Activated T-helper 2 cell treated with anti-CD3 and anti-CD28 coated beads, Interferon-gamma antibody, Interleukin-2, Interleukin-4, amounts not matched to agents 10 μg/mL and 5 μg/mL and 100 μg/mL, durations not matched to agents 14 hours and 24 hours and 36 hours (primary cell): ENCODE measurements at regions of chr1 and their contacts with region 1.

Region 1: GRCh38 chr1:167066333-167067122 is 23.6 kb downstream of the GPA33 start:
- DNase-seq: peak; percentile 67
- H3K4me3 Mint-ChIP-seq: peak overlapping the region; percentile 41
- H3K27ac Mint-ChIP-seq: no peak overlapping the region
- H3K4me1 Mint-ChIP-seq: peaks cover 3% of the 10 kb centered on the region
- H3K27me3 Mint-ChIP-seq: peaks cover 9% of the 10 kb centered on the region

Region 2: DNA sequence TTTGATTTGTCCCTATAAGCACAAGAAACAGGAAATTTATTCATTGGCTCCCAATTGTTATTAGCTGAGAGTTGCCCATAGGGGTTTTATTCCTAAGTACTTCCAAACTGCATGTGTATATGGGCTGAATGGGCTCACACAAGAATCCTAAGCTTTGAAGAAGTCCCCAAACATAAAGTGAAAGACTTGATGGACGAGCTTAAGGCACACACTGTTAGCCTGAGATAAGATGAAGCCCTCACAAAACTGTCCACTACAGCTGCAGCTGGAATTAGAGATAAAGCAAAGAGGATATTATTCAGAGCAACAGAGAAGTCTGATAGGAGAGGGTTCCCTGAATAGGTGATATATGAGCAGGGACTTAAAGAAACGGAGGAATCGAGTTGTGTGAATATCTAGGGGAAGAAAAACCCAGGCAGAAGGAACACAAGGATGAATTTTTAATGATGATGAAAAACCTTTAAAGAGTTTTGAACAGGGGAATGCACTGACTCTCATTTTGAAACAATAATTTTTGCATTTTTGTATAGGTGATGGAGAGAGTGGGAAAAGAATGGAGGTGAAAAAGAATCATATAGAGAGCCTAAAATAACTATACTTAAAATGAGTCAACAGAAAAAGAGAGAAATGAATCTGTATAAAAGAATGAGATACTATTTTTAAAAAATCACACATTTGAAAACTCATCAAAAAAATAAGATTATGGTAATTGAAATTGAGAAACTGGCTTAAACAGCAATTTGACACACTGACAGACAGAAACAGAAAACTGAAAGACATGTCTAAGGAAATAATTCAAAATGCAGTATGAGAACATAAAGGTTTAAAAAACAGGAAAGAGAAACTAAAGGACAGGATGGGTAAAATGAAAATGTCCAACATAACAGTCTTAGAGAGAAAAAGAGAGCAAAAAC is 360.9 kb before region 1 on chr1:
- intact Hi-C with region 1: no loop called
- DNase-seq: no peak
- H3K4me3 Mint-ChIP-seq: no peak overlapping the region
- H3K27ac Mint-ChIP-seq: no peak overlapping the region
- H3K4me1 Mint-ChIP-seq: no peaks in the 10 kb centered on the region
- H3K27me3 Mint-ChIP-seq: peaks cover 2% of the 10 kb centered on the region

Region 3: DNA sequence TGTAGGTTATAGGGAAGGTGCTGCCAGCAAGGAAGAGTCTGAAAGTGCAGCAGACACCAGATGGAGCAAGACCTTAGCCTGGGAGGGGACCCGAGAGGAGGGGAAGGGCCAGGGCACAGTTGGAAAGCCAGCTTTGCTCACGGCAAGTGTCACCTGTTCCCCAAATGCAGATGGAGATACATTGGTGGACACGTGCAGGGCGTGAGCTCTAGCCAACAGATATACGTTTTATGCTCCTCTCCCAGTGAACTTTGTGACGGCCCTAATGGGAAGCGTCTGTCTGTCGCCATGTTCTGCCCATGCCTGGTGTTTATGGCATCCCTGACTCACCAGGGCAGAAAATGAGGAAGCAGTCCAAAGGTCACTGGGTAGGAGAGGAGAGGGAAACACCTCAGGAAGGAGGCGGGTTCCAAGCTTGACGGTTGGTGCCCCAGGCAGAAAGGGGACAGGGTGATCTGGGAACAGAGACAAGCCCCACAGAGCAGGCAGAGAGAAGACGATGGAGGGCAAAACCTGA is 16.0 kb after region 1 on chr1:
- intact Hi-C with region 1: no loop called
- DNase-seq: no peak
- H3K4me3 Mint-ChIP-seq: no peak overlapping the region
- H3K27ac Mint-ChIP-seq: no peak overlapping the region
- H3K4me1 Mint-ChIP-seq: no peaks in the 10 kb centered on the region
- H3K27me3 Mint-ChIP-seq: peaks cover 20% of the 10 kb centered on the region

Region 4: DNA sequence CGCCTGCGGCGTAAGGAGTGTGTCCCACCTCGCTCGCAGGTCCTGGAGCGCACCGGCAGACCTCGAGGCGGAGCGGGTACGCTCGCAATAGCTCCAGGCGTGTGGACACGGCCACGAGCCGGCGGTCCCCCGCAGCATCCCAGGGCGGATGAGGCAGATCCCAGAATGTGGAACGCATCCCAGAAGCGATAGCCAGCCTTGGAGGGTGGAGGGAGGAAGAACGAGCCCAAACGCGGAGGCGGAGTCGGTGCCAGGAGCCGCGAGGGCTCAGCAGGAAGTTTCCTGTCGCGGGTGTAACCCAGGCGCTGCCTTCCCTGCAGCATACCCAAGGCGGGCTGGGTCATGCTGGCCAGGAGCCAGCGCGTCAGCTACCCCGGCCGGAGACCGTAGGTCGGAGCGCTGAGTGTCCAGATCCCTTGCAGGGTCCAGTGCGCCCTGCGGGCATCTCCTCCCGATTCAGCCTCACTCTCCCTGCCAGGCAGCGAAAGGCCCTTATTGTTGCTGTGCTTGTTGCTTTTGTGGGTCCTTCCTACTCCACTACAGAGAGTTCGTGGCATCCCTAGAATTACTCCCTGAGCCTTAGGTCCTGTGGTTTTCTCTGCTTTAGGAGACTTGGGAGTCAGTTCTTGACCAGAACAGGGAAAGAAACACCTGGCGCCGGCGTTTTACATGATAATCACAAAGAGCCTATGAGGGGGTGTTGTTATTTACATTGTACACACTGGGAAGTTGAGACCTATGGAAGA is 55.0 kb after region 1 on chr1:
- intact Hi-C with region 1: loop called (anchors 2 kb)
- DNase-seq: no peak
- H3K4me3 Mint-ChIP-seq: peak overlapping the region; percentile 76
- H3K27ac Mint-ChIP-seq: no peak overlapping the region
- H3K4me1 Mint-ChIP-seq: no peaks in the 10 kb centered on the region
- H3K27me3 Mint-ChIP-seq: peaks cover 7% of the 10 kb centered on the region

Region 5: DNA sequence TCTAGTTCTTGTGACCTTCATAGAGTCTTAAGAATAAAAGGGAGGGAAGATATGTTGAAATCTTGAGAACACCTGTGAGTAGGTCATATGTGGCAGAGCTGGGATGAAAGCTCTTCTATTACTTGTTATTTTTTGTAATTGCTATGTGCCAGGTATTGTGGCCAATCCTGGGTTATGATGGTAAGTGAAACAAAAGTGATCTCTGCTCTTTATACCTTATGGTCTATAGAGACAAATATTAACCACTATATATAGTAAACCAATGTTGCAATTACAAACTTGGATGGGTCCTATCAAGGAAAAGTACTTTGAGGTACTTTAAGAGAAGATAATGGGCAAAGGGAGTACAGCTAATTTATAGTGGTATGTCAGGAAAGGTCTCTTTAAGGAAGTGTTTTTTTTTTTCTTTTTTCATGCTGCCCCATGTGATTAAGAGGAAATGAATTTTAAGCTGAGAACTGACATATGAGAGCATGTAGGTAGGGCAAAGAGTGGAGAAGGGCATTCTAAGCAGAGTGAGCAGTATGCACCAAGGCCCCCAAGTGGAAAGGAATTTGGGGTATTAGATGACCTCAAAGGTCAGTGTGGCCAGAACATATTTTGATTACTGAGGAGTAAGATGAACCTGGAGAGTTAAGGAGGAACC is 197.4 kb after region 1 on chr1:
- intact Hi-C with region 1: loop called (anchors 5 kb)
- DNase-seq: no peak
- H3K4me3 Mint-ChIP-seq: no peak overlapping the region
- H3K27ac Mint-ChIP-seq: no peak overlapping the region
- H3K4me1 Mint-ChIP-seq: peaks cover 24% of the 10 kb centered on the region
- H3K27me3 Mint-ChIP-seq: no peaks in the 10 kb centered on the region

Region 6: GRCh38 chr1:167401260-167401873 is 334.8 kb after region 1 on chr1:
- intact Hi-C with region 1: loop called (anchors 10 kb)
- DNase-seq: peak; percentile 33
- H3K4me3 Mint-ChIP-seq: no peak overlapping the region
- H3K27ac Mint-ChIP-seq: no peak overlapping the region
- H3K4me1 Mint-ChIP-seq: peaks cover 1% of the 10 kb centered on the region
- H3K27me3 Mint-ChIP-seq: no peaks in the 10 kb centered on the region

Region 7: GRCh38 chr1:167442124-167442848 is 375.8 kb after region 1 on chr1:
- intact Hi-C with region 1: loop called (anchors 5 kb)
- DNase-seq: peak; percentile 79
- H3K4me3 Mint-ChIP-seq: no peak overlapping the region
- H3K27ac Mint-ChIP-seq: peak overlapping the region; percentile 30
- H3K4me1 Mint-ChIP-seq: peaks cover 65% of the 10 kb centered on the region
- H3K27me3 Mint-ChIP-seq: no peaks in the 10 kb centered on the region

Region 8: DNA sequence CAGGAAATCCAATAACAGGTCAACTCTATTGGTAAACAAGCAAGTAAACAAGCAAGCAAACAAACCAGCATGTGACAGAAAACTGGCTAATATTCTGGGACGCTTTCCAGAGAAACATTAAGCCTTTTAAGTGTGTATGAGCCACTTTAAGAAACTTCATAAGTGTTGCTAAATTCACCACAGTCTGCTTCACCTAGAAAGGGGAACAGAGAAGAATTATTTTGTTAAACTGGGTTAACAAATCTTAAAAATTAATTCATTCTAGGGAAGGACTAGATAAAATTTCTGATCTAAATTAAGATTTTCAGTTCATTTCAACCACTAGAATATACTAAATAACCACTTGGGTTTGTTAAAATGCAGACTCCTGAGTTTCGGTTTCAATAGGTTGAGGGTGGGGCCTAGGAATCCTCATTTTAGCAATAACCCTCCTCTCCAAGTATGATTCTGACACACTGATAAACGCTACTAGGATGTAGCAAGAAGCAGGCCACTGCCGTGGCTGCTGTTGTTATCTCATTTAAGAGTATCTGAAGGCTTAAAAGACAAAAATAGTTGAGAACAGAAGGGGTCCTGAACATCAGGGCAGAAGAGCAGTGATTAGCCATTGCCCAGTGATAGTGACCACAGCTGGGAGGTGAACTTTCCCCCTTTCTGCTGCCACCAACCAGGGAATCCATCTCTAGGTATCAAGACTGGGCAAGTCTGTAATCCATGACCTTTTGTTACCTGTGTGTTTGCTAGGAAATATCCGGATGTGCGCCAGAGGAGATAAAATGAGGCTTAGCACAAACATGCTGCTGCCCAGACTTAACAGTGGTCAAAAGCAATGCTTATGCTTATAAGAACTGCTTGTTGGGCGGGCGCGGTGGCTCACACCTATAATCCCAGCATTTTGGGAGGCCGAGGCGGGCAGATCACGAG is 475.8 kb after region 1 on chr1:
- intact Hi-C with region 1: loop called (anchors 5 kb)
- DNase-seq: no peak
- H3K4me3 Mint-ChIP-seq: no peak overlapping the region
- H3K27ac Mint-ChIP-seq: peak overlapping the region; percentile 40
- H3K4me1 Mint-ChIP-seq: peaks cover 54% of the 10 kb centered on the region
- H3K27me3 Mint-ChIP-seq: no peaks in the 10 kb centered on the region

Region 9: GRCh38 chr1:167553136-167554027 is 486.9 kb after region 1 on chr1 and contains the start of gene CREG1:
- intact Hi-C with region 1: loop called (anchors 5 kb)
- DNase-seq: peak; percentile 86
- H3K4me3 Mint-ChIP-seq: peak within 1 kb of the TSS; percentile 86
- H3K27ac Mint-ChIP-seq: peak within 1 kb of the TSS; percentile 40
- H3K4me1 Mint-ChIP-seq: peaks cover 27% of the 10 kb centered on the region
- H3K27me3 Mint-ChIP-seq: peaks cover 8% of the 10 kb centered on the region
- total RNA-seq, gene CREG1: 13.8 and 15.6 TPM in 2 replicates